Calu3 (cell line): ENCODE measurements at regions of chr5 and their contacts with region 1.

Region 1: GRCh38 chr5:98827161-98827560 is 53.7 kb downstream of the RGMB start:
- DNase-seq: peak; percentile 39
- H3K4me3 Mint-ChIP-seq: no peak overlapping the region
- H3K27ac Mint-ChIP-seq: no peak overlapping the region
- H3K4me1 Mint-ChIP-seq: no peaks in the 10 kb centered on the region
- H3K27me3 Mint-ChIP-seq: no peaks in the 10 kb centered on the region
- CTCF ChIP-seq: peak; percentile 29

Region 2: DNA sequence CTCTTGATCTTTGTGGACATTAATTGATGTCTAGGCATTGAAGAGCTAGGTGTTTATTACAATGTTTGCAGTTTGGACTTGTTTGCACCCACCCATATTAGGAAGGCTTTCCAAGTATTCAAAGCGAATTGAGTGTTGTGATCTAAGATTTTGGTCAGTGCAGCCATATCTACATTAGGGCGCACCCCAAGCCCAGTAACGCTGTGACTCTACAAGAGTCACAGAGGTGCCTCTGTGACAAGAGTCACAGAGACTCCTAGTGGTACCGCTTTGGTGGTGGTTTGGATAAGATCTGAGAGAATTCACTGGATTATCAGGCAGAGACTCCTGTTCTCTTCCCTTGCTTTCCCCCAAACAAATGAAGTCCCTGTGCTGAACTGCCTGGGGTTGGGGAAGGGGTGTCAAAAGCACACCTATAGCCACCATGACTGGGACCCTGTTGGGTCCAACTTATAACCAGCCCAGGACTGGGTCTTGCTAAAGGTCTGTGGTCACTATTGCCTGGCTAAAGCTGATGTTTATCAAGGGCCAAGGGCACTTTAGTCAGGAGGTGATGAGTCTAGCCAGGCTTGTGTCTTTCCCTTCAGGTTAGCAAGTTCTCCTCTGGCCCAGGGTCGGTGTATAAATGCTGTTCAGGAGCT is 1530.0 kb before region 1 on chr5:
- CTCF ChIA-PET with region 1: no interaction called
- intact Hi-C with region 1: loop called (anchors 1 kb)
- DNase-seq: peak; percentile 63
- H3K4me3 Mint-ChIP-seq: no peak overlapping the region
- H3K27ac Mint-ChIP-seq: no peak overlapping the region
- H3K4me1 Mint-ChIP-seq: no peaks in the 10 kb centered on the region
- H3K27me3 Mint-ChIP-seq: no peaks in the 10 kb centered on the region
- CTCF ChIP-seq: peak; percentile 59

Region 3: GRCh38 chr5:97425511-97425910 is 1401.7 kb before region 1 on chr5:
- CTCF ChIA-PET with region 1: no interaction called
- intact Hi-C with region 1: loop called (anchors 10 kb)
- DNase-seq: no peak
- H3K4me3 Mint-ChIP-seq: no peak overlapping the region
- H3K27ac Mint-ChIP-seq: no peak overlapping the region
- H3K4me1 Mint-ChIP-seq: no peaks in the 10 kb centered on the region
- H3K27me3 Mint-ChIP-seq: no peaks in the 10 kb centered on the region
- CTCF ChIP-seq: no peak

Region 4: DNA sequence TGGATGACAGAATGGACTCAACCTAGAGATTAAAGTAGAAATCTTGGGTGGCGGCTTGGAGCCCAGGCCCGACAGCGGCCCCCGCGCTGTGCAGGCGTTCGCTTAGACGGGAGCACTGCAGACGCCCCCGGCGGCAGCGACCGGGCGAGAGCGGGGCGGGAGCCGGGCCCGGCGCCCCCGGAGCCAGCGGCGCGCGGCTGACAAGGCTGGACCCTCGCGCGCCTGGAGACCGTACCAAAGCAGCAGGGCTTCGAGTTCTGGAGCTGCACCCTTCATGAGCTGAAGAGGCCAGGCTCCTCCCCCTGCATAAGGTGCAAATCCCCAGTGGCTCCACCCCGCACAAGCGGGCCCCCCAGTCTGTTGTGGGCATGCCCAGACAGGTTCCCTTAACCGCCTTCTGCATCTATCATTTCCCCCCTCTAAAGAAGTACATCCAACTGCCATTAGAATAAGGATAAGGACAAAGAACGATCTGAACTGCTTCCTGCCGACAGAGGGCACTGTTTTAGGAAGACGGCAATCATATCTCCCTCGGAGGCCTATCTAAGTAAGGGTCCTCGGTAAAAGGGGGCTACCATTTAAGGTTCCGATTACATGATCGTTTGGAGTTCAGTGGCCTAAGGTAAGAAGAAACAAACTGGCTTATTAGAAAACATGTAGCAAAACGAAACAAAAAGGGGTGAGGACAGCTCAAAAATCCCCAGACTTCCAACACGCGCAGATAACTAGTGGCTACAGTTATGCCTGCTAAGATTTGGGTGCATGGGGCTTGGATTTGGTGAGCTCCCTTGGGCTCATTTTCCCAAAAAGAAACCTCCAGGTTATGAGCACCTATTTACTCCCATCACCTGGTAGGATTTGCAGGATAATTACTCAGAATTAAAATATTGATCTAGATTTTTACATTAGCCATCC is 12.6 kb after region 1 on chr5:
- CTCF ChIA-PET with region 1: no interaction called
- intact Hi-C with region 1: no loop called
- DNase-seq: no peak
- H3K4me3 Mint-ChIP-seq: no peak overlapping the region
- H3K27ac Mint-ChIP-seq: no peak overlapping the region
- H3K4me1 Mint-ChIP-seq: no peaks in the 10 kb centered on the region
- H3K27me3 Mint-ChIP-seq: no peaks in the 10 kb centered on the region
- CTCF ChIP-seq: no peak

Region 5: DNA sequence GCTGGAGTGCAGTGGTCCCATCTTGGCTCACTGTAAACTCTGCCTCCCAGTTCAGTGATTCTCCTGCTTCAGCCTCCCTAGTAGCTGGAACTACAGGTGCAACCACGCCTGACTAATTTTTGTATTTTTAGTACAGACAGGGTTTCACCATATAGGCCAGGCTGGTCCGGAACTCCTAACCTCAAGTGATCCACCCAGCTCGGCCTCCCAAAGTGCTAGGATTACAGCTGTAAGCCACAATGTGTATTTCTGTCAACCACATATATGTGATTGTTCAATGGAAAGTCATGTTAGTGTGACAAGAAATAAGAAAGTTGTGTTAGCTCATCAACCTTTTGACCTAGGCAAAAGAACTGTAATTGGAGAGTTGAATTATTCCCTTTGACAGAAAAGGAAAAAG is 778.7 kb after region 1 on chr5:
- CTCF ChIA-PET with region 1: no interaction called
- intact Hi-C with region 1: no loop called
- DNase-seq: no peak
- H3K4me3 Mint-ChIP-seq: no peak overlapping the region
- H3K27ac Mint-ChIP-seq: no peak overlapping the region
- H3K4me1 Mint-ChIP-seq: peaks cover 6% of the 10 kb centered on the region
- H3K27me3 Mint-ChIP-seq: no peaks in the 10 kb centered on the region
- CTCF ChIP-seq: no peak